ENCODE measurements at regions of chrX and their contacts with region 1.

Region 1: DNA sequence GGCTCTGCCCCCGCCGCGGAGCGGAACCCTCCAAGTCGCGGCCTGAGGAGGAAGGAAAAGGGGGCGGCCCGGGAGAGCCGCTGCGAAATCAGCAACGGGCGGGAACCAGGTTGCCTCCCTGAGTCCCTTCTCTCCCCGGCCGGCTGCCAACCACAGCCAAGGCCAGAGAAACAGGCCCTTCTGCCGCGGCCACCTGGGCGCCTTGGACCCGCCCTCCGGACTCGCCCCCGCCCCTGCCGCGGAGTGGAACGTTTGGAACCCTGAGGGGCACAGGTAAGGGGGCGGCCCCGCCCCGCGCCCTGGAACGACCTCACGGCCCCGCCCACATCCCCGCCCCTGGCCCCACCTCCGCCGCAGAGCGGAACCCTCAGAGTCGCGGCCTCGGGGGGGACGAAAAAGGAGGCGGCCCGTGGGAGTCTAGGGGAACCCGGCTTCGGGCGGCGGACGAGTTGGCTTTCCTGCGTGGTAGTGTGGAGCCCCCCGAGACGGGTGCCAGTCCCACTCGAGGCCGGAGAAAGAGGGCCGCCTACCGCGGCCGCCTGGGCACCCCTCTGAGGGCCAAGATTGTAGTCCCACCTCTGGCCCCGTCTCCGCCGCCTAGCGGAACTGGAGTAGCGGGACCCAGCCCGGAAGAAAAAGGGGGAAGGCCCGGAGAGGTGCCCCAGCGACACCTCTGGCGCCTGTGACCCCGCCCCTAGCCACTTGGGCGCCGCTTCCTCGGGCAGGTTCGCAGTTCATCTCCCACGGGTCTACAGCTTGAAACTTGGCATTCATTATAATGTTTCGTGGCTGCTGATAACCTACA is 669 bp upstream of the PHKA2 start:
- DNase-seq: peak; percentile 87
- H3K4me3 ChIP-seq: peak overlapping the region; percentile 92
- H3K27ac ChIP-seq: peak overlapping the region; percentile 62
- H3K4me1 ChIP-seq: peaks cover 3% of the 10 kb centered on the region
- CTCF ChIP-seq: no peak

Region 2: DNA sequence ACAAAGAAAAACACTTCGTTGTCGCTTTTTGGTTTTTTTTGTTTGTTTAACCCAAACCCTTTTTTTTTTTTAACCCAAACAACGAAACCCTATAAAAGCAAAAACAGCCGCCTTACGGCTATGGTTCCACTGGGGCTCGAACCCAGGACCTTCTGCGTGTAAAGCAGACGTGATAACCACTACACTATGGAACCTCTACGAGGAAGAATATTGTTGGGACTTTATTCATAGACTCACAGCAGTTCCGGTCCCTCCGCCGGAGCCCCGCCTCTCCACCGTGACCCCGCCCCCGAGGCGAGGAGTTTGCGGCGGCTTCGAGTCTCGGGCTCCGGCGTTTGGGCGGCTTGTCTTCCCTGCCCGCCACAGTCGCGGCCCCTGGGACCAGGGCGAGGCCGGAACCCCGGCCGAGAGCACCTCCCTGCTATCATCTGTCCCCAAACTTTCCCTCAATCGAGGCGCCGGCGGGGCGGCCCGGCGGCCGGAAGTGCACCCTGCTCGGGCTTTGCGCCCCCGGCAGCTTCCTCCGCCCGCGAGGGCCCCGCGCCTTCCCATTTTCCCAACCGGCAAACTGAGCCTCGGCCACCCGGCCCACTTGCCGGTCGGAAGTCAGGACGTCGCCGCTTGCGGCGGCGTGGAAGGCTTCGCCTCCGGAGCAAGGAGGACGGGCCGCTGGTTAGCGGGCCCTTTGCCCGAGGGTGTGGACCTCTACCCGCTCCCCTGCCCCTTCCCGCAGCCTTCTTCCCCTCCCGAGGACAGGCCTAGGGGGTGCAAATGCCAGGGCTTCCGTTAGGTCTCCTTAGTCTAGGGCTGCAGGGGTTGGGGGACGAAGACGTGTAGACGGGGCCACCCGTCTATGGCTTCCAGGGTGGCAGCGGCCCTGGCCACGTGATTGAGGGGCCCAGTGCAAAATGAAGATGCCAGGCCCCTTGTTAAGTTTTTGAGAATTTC is 309.5 kb before region 1 on chrX:
- CTCF ChIA-PET with region 1: no interaction called
- POLR2A ChIA-PET with region 1: interaction called, 4 read pairs
- intact Hi-C with region 1: loop called (anchors 10 kb)
- DNase-seq: peak; percentile 77
- H3K4me3 ChIP-seq: peak overlapping the region; percentile 68
- H3K27ac ChIP-seq: peak overlapping the region; percentile 52
- H3K4me1 ChIP-seq: no peaks in the 10 kb centered on the region
- CTCF ChIP-seq: no peak

Region 3: DNA sequence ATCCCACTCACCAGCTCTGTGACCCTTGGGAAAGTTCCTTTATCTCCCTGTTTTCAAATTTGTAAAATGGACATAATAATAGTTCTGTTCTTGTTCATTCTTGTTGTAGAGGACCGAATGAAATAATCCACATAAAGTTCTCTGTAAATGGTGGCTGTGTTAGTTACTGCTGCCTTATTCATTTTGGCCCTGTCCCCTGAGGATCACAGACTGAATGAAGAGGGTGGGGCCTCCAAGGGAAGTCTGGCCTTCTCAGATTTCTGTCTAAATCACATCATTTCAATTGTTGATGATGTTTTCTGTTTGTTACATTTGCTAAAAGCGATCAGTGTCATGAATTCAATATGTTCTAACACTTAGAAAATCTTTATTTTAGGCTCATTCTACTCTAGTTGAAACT is 159.2 kb before region 1 on chrX:
- CTCF ChIA-PET with region 1: no interaction called
- POLR2A ChIA-PET with region 1: no interaction called
- intact Hi-C with region 1: no loop called
- DNase-seq: no peak
- H3K4me3 ChIP-seq: no peak overlapping the region
- H3K27ac ChIP-seq: no peak overlapping the region
- H3K4me1 ChIP-seq: no peaks in the 10 kb centered on the region
- CTCF ChIP-seq: no peak

Region 4: GRCh38 chrX:19629541-19629940 is 645.0 kb after region 1 on chrX:
- CTCF ChIA-PET with region 1: interaction called, 10 read pairs
- POLR2A ChIA-PET with region 1: no interaction called
- intact Hi-C with region 1: no loop called
- DNase-seq: no peak
- H3K4me3 ChIP-seq: no peak overlapping the region
- H3K27ac ChIP-seq: no peak overlapping the region
- H3K4me1 ChIP-seq: peaks cover 24% of the 10 kb centered on the region
- CTCF ChIP-seq: no peak

Measured in OCI-LY7 (cell line).